ENCODE measurements at regions of chr6 and their contacts with region 1.

Region 1: DNA sequence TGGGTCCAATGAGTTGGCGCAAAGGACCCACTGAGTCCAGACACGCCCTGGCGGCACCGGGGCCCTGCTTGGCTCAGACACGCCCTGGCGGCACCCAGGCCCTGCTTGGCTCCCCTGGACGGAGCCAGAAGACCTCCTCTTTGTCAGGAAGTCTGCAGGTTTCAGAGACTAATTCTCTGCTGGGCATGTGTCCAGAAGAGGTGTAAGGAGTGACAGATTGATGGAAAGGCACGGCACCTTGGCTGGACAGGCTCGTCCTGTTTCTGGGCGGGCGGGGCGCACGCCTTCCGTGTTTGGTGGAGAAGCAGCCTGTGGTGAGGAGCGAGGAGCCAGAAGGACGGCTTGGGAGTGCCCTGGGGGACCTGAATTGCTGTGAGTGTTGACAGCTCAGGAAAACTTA is 23.1 kb upstream of the DACT2 start:
- DNase-seq: peak in 1 of 2 donors; percentile 54
- H3K4me3 ChIP-seq: no peak overlapping the region
- H3K27ac ChIP-seq: no peak overlapping the region
- H3K4me1 ChIP-seq: no peaks in the 10 kb centered on the region
- H3K27me3 ChIP-seq: peaks cover 0 to 33% (median 8%) of the 10 kb centered on the region in 3 donors
- CTCF ChIP-seq: no peak
- EP300 ChIP-seq: no peak
- POLR2A ChIP-seq: no peak

Region 2: GRCh38 chr6:168226061-168226752 is 116.4 kb before region 1 on chr6:
- intact Hi-C with region 1: loop called (anchors 10 kb)
- DNase-seq: peak in 1 of 2 donors; percentile 65
- H3K4me3 ChIP-seq: no peak overlapping the region
- H3K27ac ChIP-seq: no peak overlapping the region
- H3K4me1 ChIP-seq: peaks cover 0 to 16% (median 3%) of the 10 kb centered on the region in 4 donors
- H3K27me3 ChIP-seq: no peaks in the 10 kb centered on the region
- CTCF ChIP-seq: no peak
- EP300 ChIP-seq: no peak
- POLR2A ChIP-seq: no peak

Region 3: DNA sequence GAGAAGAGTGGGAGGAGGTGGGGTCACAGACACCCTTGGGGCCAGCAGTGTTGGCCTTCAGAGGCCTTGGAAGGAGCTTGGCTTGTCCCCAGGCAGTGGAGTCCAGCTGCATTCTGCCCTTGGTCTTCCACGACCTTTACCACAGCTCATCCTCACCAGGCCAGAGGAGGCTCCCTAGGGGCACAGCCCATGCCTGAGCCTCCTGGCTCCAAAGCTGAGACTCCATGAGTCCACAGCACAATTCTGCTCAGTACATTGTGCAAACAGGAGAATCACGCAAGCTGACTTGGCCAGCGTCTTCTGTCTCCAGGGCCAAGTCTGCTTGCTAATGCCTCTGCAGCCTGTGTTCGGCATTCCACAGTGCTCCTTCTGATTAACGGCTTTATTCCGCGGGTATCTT is 435.6 kb after region 1 on chr6:
- intact Hi-C with region 1: no loop called
- DNase-seq: peak in 1 of 2 donors; percentile 71
- H3K4me3 ChIP-seq: no peak overlapping the region
- H3K27ac ChIP-seq: peak overlapping the region in 1 of 5 donors; percentile 62
- H3K4me1 ChIP-seq: peaks cover 0 to 34% (median 10%) of the 10 kb centered on the region in 4 donors
- H3K27me3 ChIP-seq: no peaks in the 10 kb centered on the region
- CTCF ChIP-seq: no peak
- EP300 ChIP-seq: no peak
- POLR2A ChIP-seq: no peak